AG04450 (cell line): ENCODE measurements at regions of chr10 and their contacts with region 1.

Region 1: DNA sequence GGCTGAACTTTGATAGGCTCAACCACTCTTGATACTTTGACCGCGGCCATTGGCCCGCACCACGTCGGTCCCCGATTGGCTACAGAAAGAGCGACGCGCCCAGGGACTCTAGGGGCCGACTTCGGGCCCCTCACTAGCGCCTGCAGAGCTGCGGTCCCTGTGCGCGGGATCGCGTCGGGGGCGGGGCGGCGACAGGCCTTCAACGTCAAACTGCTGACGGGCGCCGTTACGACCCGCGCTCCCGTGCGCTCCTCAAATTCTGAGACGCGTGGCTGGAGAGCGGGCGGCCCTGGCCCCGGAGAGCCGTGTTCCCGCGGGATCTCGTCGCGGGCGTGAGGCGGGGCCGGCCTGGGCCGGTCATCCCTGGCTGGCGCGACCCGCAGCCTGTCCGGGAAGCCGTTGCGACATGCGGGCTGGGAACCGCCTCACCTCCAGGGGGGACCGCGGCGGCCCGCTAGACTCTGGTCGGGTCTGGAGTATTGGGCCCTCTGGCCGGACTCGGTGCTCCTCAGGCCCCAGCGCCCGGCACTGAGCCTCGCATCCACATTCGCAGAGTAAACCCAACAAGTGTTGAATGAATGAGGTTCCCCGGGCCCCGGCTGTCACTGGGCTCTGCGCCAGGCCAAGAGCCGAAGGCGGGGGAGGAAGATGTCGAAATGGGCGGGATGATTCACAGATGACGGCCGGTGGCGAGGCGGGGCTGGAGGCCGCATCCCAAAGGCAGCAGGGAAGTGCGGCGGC is 644 bp upstream of the SLC25A28 start:
- DNase-seq: peak; percentile 85
- H3K4me3 ChIP-seq: peak overlapping the region; percentile 71
- H3K27ac ChIP-seq: peak overlapping the region; percentile 99
- H3K27me3 ChIP-seq: no peaks in the 10 kb centered on the region
- CTCF ChIP-seq: no peak

Region 2: GRCh38 chr10:99430451-99431189 is 190.3 kb before region 1 on chr10 and contains the start of gene GOT1:
- CTCF ChIA-PET with region 1: interaction called, 413 read pairs
- POLR2A ChIA-PET with region 1: interaction called, 9 read pairs
- DNase-seq: peak; percentile 97
- H3K4me3 ChIP-seq: peak within 1 kb of the TSS; percentile 100
- H3K27ac ChIP-seq: peak within 1 kb of the TSS; percentile 87
- H3K27me3 ChIP-seq: no peaks in the 10 kb centered on the region
- CTCF ChIP-seq: no peak
- polyA plus RNA-seq, gene GOT1: 34.5 and 41.5 TPM in 2 replicates

Region 3: GRCh38 chr10:99659031-99659867 is 38.4 kb after region 1 on chr10 and contains the start of gene ENTPD7:
- CTCF ChIA-PET with region 1: interaction called, 3 read pairs
- POLR2A ChIA-PET with region 1: interaction called, 20 read pairs
- DNase-seq: peak; percentile 87
- H3K4me3 ChIP-seq: peak within 1 kb of the TSS; percentile 92
- H3K27ac ChIP-seq: peak within 1 kb of the TSS; percentile 66
- H3K27me3 ChIP-seq: no peaks in the 10 kb centered on the region
- CTCF ChIP-seq: peak; percentile 16; the same call in 1 of the 2 replicates
- polyA plus RNA-seq, gene ENTPD7: 14.4 and 16.2 TPM in 2 replicates

Region 4: GRCh38 chr10:99732033-99732912 is 111.4 kb after region 1 on chr10 and contains the starts of genes COX15 and CUTC:
- CTCF ChIA-PET with region 1: no interaction called
- POLR2A ChIA-PET with region 1: interaction called, 14 read pairs
- DNase-seq: peak; percentile 93
- H3K4me3 ChIP-seq: peak within 1 kb of the TSS; percentile 98
- H3K27ac ChIP-seq: peak within 1 kb of the TSS; percentile 91
- H3K27me3 ChIP-seq: no peaks in the 10 kb centered on the region
- CTCF ChIP-seq: peak; percentile 34; the same call in 1 of the 2 replicates
- polyA plus RNA-seq, gene COX15: 26.1 and 32.2 TPM in 2 replicates
- polyA plus RNA-seq, gene CUTC: 13.9 and 18.0 TPM in 2 replicates